H1 (cell line): ENCODE measurements at regions of chr1 and their contacts with region 1.

Region 1: GRCh38 chr1:44924835-44925513 is 61.4 kb downstream of the EIF2B3 start:
- DNase-seq: no peak
- H3K4me3 ChIP-seq: no peak overlapping the region
- H3K27ac ChIP-seq: no peak overlapping the region
- H3K4me1 ChIP-seq: no peaks in the 10 kb centered on the region
- H3K27me3 ChIP-seq: no peaks in the 10 kb centered on the region
- CTCF ChIP-seq: peak in 2 of 3 experiments; percentile 26 to 50; a peak in 2 of 4 replicates
- EP300 ChIP-seq: no peak
- POLR2A ChIP-seq: no peak
- RAD21 ChIP-seq: peak; percentile 12 to 32; a peak in 2 of 4 replicates

Region 2: GRCh38 chr1:44874155-44874554 is 50.8 kb before region 1 on chr1:
- CTCF ChIA-PET with region 1: no interaction called
- POLR2A ChIA-PET with region 1: no interaction called
- DNase-seq: no peak
- H3K4me3 ChIP-seq: no peak overlapping the region
- H3K27ac ChIP-seq: no peak overlapping the region
- H3K4me1 ChIP-seq: no peaks in the 10 kb centered on the region
- H3K27me3 ChIP-seq: no peaks in the 10 kb centered on the region
- CTCF ChIP-seq: no peak
- EP300 ChIP-seq: no peak
- POLR2A ChIP-seq: no peak
- RAD21 ChIP-seq: no peak

Region 3: GRCh38 chr1:44941424-44942324 is 16.7 kb after region 1 on chr1:
- CTCF ChIA-PET with region 1: interaction called, 10 read pairs
- POLR2A ChIA-PET with region 1: interaction called, 3 read pairs
- DNase-seq: no peak
- H3K4me3 ChIP-seq: no peak overlapping the region
- H3K27ac ChIP-seq: no peak overlapping the region
- H3K4me1 ChIP-seq: no peaks in the 10 kb centered on the region
- H3K27me3 ChIP-seq: no peaks in the 10 kb centered on the region
- CTCF ChIP-seq: no peak
- EP300 ChIP-seq: no peak
- POLR2A ChIP-seq: no peak
- RAD21 ChIP-seq: no peak